ENCODE measurements at regions of chr7 and their contacts with region 1.

Region 1: DNA sequence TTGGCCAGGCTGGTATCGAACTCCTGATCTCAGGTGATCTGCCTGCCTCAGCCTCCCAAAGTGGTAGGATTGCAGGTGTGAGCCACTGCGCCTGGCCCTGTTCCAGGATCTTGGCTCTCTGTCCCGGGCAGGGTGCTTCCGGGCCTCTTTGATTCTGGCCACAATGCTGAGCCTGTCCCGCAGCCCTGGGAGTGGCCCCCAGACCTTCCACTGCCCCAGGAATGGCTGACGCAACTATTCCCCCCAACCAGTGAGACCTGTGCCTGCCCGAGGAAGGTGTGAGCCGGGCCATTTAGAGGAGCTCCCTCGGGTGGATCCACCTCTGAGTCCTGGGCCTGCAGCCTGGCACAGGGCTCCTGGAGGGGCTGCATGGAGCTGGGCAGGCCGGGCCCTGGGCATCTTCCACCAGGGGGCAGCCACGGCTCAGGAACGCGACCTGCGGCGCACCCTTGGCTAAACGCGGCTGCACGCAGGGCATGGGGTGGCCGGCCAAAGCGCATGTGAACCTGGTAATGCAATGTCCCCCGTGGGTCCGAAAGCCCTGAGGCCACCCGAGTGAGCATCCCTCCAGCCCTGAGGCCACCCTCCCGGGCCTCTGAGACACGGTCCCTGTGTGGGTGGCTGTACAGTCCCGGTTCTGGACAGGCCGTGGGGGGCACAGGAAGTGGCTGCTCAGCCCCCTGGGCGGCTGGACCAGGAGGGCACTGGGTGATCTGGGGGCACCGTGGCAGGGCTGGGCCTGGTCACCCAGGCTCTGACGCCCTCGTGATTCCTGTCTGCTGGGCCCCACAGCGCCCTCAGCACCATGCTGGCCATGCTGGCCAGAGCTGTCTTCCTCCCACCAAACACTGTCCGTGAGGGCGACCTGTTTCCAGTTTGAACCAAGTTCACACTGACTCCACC is 24.8 kb downstream of the GRIFIN start:
- DNase-seq: peak; percentile 55 to 87 (median 79)
- ATAC-seq: peak; percentile 96
- H3K4me3 ChIP-seq: peak overlapping the region; percentile 45 to 56
- H3K4me3 Mint-ChIP-seq: peak overlapping the region; percentile 67
- H3K27ac ChIP-seq: no peak overlapping the region
- H3K27ac Mint-ChIP-seq: no peak overlapping the region
- H3K4me1 ChIP-seq: peaks cover 8% of the 10 kb centered on the region
- H3K4me1 Mint-ChIP-seq: peaks cover 11% of the 10 kb centered on the region
- H3K27me3 ChIP-seq: no peaks in the 10 kb centered on the region
- H3K27me3 Mint-ChIP-seq: no peaks in the 10 kb centered on the region
- CTCF ChIP-seq: peak; percentile 70

Region 2: GRCh38 chr7:2431260-2431867 is 20.1 kb before region 1 on chr7:
- CTCF ChIA-PET with region 1: interaction called, 7 read pairs
- POLR2A ChIA-PET with region 1: no interaction called
- intact Hi-C with region 1: loop called in 1 of 2 experiments (anchors 2 kb)
- DNase-seq: peak; percentile 16 to 68 (median 47)
- ATAC-seq: peak; percentile 88
- H3K4me3 ChIP-seq: no peak overlapping the region
- H3K4me3 Mint-ChIP-seq: no peak overlapping the region
- H3K27ac ChIP-seq: peak overlapping the region in 1 of 2 experiments; percentile 17
- H3K27ac Mint-ChIP-seq: peak overlapping the region; percentile 0
- H3K4me1 ChIP-seq: no peaks in the 10 kb centered on the region
- H3K4me1 Mint-ChIP-seq: peaks cover 8% of the 10 kb centered on the region
- H3K27me3 ChIP-seq: no peaks in the 10 kb centered on the region
- H3K27me3 Mint-ChIP-seq: no peaks in the 10 kb centered on the region
- CTCF ChIP-seq: peak; percentile 55

Region 3: GRCh38 chr7:2471396-2471795 is 20.0 kb after region 1 on chr7:
- CTCF ChIA-PET with region 1: interaction called, 45 read pairs
- POLR2A ChIA-PET with region 1: interaction called, 3 read pairs
- intact Hi-C with region 1: loop called (anchors 1 to 2 kb)
- DNase-seq: no peak
- ATAC-seq: no peak
- H3K4me3 ChIP-seq: no peak overlapping the region
- H3K4me3 Mint-ChIP-seq: no peak overlapping the region
- H3K27ac ChIP-seq: no peak overlapping the region
- H3K27ac Mint-ChIP-seq: no peak overlapping the region
- H3K4me1 ChIP-seq: peaks cover 5% of the 10 kb centered on the region
- H3K4me1 Mint-ChIP-seq: peaks cover 2% of the 10 kb centered on the region
- H3K27me3 ChIP-seq: no peaks in the 10 kb centered on the region
- H3K27me3 Mint-ChIP-seq: peaks cover 2% of the 10 kb centered on the region
- CTCF ChIP-seq: no peak

Region 4: GRCh38 chr7:2567679-2568278 is 116.4 kb after region 1 on chr7:
- CTCF ChIA-PET with region 1: interaction called, 12 read pairs
- POLR2A ChIA-PET with region 1: no interaction called
- intact Hi-C with region 1: loop called (anchors 1 to 2 kb)
- DNase-seq: peak in 1 of 9 experiments; percentile 44
- ATAC-seq: no peak
- H3K4me3 ChIP-seq: no peak overlapping the region
- H3K4me3 Mint-ChIP-seq: no peak overlapping the region
- H3K27ac ChIP-seq: no peak overlapping the region
- H3K27ac Mint-ChIP-seq: no peak overlapping the region
- H3K4me1 ChIP-seq: no peaks in the 10 kb centered on the region
- H3K4me1 Mint-ChIP-seq: peaks cover 2% of the 10 kb centered on the region
- H3K27me3 ChIP-seq: no peaks in the 10 kb centered on the region
- H3K27me3 Mint-ChIP-seq: no peaks in the 10 kb centered on the region
- CTCF ChIP-seq: no peak

Region 5: DNA sequence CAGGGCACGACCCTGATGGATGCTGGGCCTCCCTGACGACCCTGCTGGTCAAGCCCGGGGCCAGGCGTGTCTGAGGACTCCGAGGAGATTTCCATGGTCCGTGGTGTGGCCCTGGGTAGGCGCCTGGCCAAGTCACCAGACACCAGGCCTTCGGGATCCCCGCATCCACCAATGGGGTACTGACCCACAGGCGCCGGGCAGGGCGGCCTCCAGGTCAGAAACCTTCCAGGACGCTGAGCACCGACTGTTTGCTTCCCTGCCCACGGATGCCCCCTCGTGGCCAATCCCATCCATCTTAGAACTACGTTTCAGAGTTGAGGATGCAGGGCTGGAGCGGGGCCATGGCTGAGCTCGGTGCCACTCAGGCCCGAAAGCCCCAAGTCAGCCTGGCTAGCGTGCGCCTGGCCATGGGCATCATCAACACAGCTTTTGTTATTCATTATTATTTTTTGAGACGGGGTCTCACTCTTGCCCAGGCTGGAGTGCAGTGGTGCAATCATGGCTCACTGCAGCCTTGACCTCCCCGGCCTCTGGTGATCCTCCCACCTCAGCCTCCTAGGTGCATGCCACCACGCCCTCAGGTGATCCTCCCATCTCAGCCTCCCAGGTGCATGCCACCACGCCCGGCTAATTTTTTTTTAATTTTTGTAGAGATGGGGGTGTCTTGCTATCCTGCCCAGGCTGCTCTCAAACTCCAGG is 229.5 kb after region 1 on chr7:
- CTCF ChIA-PET with region 1: interaction called, 38 read pairs
- POLR2A ChIA-PET with region 1: no interaction called
- intact Hi-C with region 1: loop called in 1 of 2 experiments (anchors 2 kb)
- DNase-seq: peak in 7 of 9 experiments; percentile 22 to 71 (median 60)
- ATAC-seq: no peak
- H3K4me3 ChIP-seq: no peak overlapping the region
- H3K4me3 Mint-ChIP-seq: no peak overlapping the region
- H3K27ac ChIP-seq: no peak overlapping the region
- H3K27ac Mint-ChIP-seq: no peak overlapping the region
- H3K4me1 ChIP-seq: no peaks in the 10 kb centered on the region
- H3K4me1 Mint-ChIP-seq: no peaks in the 10 kb centered on the region
- H3K27me3 ChIP-seq: peaks cover 0 to 3% of the 10 kb centered on the region in 2 experiments
- H3K27me3 Mint-ChIP-seq: peaks cover 9% of the 10 kb centered on the region
- CTCF ChIP-seq: peak; percentile 37